CD4-positive, alpha-beta T cell (primary cell): ENCODE measurements at regions of chr2 and their contacts with region 1.

Region 1: GRCh38 chr2:189783927-189784867 is at the starts of genes ORMDL1 and PMS1:
- DNase-seq: peak; percentile 84 to 98 (median 92)
- ATAC-seq: peak; percentile 91
- H3K4me3 ChIP-seq: peak within 1 kb of the TSS; percentile 84
- H3K4me3 Mint-ChIP-seq: peak within 1 kb of the TSS; percentile 99
- H3K27ac ChIP-seq: peak within 1 kb of the TSS; percentile 90 to 93
- H3K27ac Mint-ChIP-seq: peak within 1 kb of the TSS; percentile 99
- H3K4me1 ChIP-seq: peaks cover 23% of the 10 kb centered on the region
- H3K4me1 Mint-ChIP-seq: peaks cover 58% of the 10 kb centered on the region
- H3K27me3 ChIP-seq: no peaks in the 10 kb centered on the region
- H3K27me3 Mint-ChIP-seq: no peaks in the 10 kb centered on the region
- CTCF ChIP-seq: no peak
- total RNA-seq, gene ORMDL1: 104 to 106 TPM
- total RNA-seq, gene PMS1: 9.6 to 9.8 TPM

Region 2: GRCh38 chr2:189580658-189581353 is 203.4 kb before region 1 on chr2 and contains the start of gene SLC40A1:
- CTCF ChIA-PET with region 1: no interaction called
- POLR2A ChIA-PET with region 1: interaction called, 18 read pairs
- intact Hi-C with region 1: loop called in 1 of 2 experiments (anchors 10 kb)
- DNase-seq: peak; percentile 44 to 88 (median 69)
- ATAC-seq: peak; percentile 96
- H3K4me3 ChIP-seq: peak within 1 kb of the TSS; percentile 79
- H3K4me3 Mint-ChIP-seq: peak within 1 kb of the TSS; percentile 95
- H3K27ac ChIP-seq: peak within 1 kb of the TSS; percentile 46 to 66
- H3K27ac Mint-ChIP-seq: peak within 1 kb of the TSS; percentile 83
- H3K4me1 ChIP-seq: peaks cover 21% of the 10 kb centered on the region
- H3K4me1 Mint-ChIP-seq: peaks cover 56% of the 10 kb centered on the region
- H3K27me3 ChIP-seq: no peaks in the 10 kb centered on the region
- H3K27me3 Mint-ChIP-seq: peaks cover 9% of the 10 kb centered on the region
- CTCF ChIP-seq: no peak
- total RNA-seq, gene SLC40A1: 7.4 to 8.2 TPM

Region 3: DNA sequence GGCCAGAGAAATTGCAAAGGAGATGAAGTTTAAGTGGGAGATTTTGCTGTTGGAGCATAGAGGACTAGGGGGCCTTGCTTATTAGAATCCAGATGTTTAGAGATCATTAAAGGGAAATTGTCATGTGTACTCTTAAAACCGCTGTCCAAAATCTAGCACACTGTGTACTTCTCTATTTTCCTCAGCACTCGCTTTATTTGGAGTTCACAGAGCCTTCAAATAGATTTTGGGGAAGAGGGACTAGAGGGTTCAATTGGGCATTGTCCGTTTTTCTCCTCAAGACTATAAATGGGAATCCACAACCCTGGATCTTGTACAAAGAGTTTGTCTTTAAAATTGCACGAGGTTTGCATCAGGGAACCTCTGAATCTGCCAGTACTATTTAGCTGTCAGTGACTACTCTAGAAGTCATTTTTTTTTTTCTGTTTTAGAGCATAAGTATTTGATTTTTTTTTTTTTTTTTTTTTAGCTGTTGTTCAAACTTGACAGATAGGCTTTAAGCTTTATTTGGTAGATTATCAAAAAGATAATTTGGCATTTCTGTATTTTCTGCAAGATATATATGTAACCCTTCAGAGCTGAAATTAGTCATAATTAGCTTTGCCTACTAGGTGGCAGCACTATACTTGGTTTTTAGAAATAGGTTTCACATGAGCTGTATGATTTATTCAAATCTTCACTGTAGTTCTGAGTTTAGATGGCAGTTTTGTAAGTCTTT is 14.3 kb after region 1 on chr2:
- CTCF ChIA-PET with region 1: interaction called, 10 read pairs
- POLR2A ChIA-PET with region 1: no interaction called
- intact Hi-C with region 1: no loop called
- DNase-seq: peak in 3 of 14 experiments; percentile 13 to 23 (median 15)
- ATAC-seq: no peak
- H3K4me3 ChIP-seq: no peak overlapping the region
- H3K4me3 Mint-ChIP-seq: no peak overlapping the region
- H3K27ac ChIP-seq: no peak overlapping the region
- H3K27ac Mint-ChIP-seq: no peak overlapping the region
- H3K4me1 ChIP-seq: no peaks in the 10 kb centered on the region
- H3K4me1 Mint-ChIP-seq: no peaks in the 10 kb centered on the region
- H3K27me3 ChIP-seq: no peaks in the 10 kb centered on the region
- H3K27me3 Mint-ChIP-seq: no peaks in the 10 kb centered on the region
- CTCF ChIP-seq: no peak

Region 4: GRCh38 chr2:190443778-190444481 is 659.7 kb after region 1 on chr2:
- CTCF ChIA-PET with region 1: no interaction called
- POLR2A ChIA-PET with region 1: no interaction called
- intact Hi-C with region 1: no loop called
- DNase-seq: no peak
- ATAC-seq: no peak
- H3K4me3 ChIP-seq: no peak overlapping the region
- H3K4me3 Mint-ChIP-seq: no peak overlapping the region
- H3K27ac ChIP-seq: no peak overlapping the region
- H3K27ac Mint-ChIP-seq: no peak overlapping the region
- H3K4me1 ChIP-seq: peaks cover 17% of the 10 kb centered on the region
- H3K4me1 Mint-ChIP-seq: peaks cover 89% of the 10 kb centered on the region
- H3K27me3 ChIP-seq: no peaks in the 10 kb centered on the region
- H3K27me3 Mint-ChIP-seq: no peaks in the 10 kb centered on the region
- CTCF ChIP-seq: no peak

Region 5: GRCh38 chr2:190648289-190649034 is 864.3 kb after region 1 on chr2:
- CTCF ChIA-PET with region 1: no interaction called
- POLR2A ChIA-PET with region 1: no interaction called
- intact Hi-C with region 1: loop called (anchors 10 kb)
- DNase-seq: peak; percentile 82 to 98 (median 89)
- ATAC-seq: peak; percentile 77
- H3K4me3 ChIP-seq: peak overlapping the region; percentile 71
- H3K4me3 Mint-ChIP-seq: peak overlapping the region; percentile 92
- H3K27ac ChIP-seq: peak overlapping the region; percentile 83
- H3K27ac Mint-ChIP-seq: peak overlapping the region; percentile 93
- H3K4me1 ChIP-seq: peaks cover 20% of the 10 kb centered on the region
- H3K4me1 Mint-ChIP-seq: peaks cover 57% of the 10 kb centered on the region
- H3K27me3 ChIP-seq: no peaks in the 10 kb centered on the region
- H3K27me3 Mint-ChIP-seq: no peaks in the 10 kb centered on the region
- CTCF ChIP-seq: no peak